ENCODE measurements at regions of chr14 and their contacts with region 1.

Region 1: DNA sequence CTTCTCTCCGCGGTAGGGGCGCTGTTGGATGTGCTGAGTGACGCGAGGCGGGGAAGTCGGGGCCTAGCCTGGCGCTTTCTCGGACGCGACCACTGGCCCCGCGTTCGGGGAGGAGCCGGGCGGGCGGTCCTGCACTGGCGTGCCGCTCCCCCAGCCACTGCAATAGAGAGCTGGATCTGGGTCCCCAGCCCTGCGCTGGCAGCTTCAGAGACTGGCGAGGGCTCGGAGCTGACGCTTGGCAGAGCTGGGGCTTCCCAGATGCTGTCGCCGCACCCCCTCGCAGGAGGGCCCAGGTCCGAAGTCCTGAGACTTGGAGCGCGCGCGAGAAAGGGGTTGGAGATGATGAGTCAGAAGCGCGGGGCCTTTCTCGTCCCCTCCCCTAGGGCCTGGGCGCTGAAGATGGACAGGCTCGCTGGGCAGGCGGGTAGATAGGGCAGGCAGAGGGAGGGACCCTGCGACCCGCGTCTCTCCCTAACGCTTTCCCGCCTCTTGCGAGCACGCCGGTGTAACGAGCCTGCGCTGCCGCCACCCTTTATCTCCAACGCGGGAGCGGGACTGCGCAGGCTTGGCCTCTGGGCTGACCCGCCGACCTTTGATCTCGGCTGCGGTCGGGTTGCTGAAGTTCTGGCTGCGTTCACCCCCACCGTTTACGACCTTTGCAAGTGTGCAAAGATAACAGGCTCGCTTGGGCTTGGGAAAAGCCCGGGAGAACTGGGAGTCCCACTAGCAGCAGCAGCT is 3.0 kb downstream of the TMEM253 start:
- DNase-seq: peak; percentile 98
- ATAC-seq: peak; percentile 83
- H3K4me3 ChIP-seq: peak overlapping the region; percentile 61 to 82 (median 66)
- H3K27ac ChIP-seq: peak overlapping the region; percentile 97
- H3K4me1 ChIP-seq: peaks cover 80% of the 10 kb centered on the region
- H3K27me3 ChIP-seq: no peaks in the 10 kb centered on the region; a peak in 1 of 5 replicates
- CTCF ChIP-seq: peak; percentile 95
- EP300 ChIP-seq: peak in 1 of 2 experiments; percentile 76; a peak in 2 of 4 replicates
- POLR2A ChIP-seq: peak in 1 of 2 experiments; percentile 95; a peak in 2 of 4 replicates
- RAD21 ChIP-seq: peak; percentile 74

Region 2: GRCh38 chr14:21092273-21093011 is 11.4 kb before region 1 on chr14:
- CTCF ChIA-PET with region 1: interaction called, 320 read pairs
- POLR2A ChIA-PET with region 1: interaction called, 91 read pairs
- in situ Hi-C with region 1: no loop called
- intact Hi-C with region 1: loop called (anchors 1 kb)
- DNase-seq: peak; percentile 72
- ATAC-seq: peak; percentile 68
- H3K4me3 ChIP-seq: no peak overlapping the region
- H3K27ac ChIP-seq: peak overlapping the region; percentile 1
- H3K4me1 ChIP-seq: peaks cover 38% of the 10 kb centered on the region
- H3K27me3 ChIP-seq: no peaks in the 10 kb centered on the region; a peak in 1 of 5 replicates
- CTCF ChIP-seq: peak; percentile 100
- EP300 ChIP-seq: peak in 1 of 2 experiments; percentile 70; a peak in 1 of 4 replicates
- POLR2A ChIP-seq: no peak
- RAD21 ChIP-seq: peak; percentile 100